ENCODE measurements at regions of chr10 and their contacts with region 1.

Region 1: DNA sequence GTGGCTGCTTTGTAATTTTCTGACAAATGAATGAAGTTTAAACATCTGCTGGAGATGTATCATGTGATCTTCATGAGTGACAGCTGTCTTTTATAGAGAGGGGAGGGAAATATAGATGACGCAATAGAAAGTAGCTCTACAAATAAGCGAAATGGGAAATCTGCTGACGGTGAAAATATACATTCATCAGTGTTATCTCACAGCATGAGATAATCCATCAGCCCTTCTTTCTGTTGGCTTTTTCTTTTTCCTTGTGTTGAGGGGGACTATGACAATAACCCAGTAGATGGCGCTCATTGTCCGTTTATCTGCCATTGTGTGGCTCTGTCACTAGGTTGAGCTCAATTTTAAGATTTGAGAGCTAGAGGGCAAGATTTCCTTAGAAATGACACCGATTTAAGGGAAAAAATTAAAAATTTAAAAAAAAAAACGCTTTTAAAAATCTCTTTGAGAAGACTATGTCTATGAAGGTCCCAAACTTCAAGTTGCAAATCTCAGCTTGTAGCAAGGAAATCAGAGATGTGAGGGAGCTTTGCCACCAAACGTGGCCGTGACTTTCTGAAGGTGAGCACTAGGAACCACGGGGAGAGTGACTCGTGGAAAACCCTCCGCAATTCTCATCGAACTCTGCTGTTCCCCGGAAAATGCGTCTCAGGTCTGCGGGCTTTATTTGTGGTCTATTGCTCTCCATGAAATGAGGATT is 114.6 kb upstream of the SFMBT2 start:
- DNase-seq: peak; percentile 87
- CTCF ChIP-seq: peak; percentile 74

Region 2: GRCh38 chr10:7243873-7244272 is 281.6 kb before region 1 on chr10:
- in situ Hi-C with region 1: no loop called
- DNase-seq: peak; percentile 39
- CTCF ChIP-seq: no peak

Region 3: DNA sequence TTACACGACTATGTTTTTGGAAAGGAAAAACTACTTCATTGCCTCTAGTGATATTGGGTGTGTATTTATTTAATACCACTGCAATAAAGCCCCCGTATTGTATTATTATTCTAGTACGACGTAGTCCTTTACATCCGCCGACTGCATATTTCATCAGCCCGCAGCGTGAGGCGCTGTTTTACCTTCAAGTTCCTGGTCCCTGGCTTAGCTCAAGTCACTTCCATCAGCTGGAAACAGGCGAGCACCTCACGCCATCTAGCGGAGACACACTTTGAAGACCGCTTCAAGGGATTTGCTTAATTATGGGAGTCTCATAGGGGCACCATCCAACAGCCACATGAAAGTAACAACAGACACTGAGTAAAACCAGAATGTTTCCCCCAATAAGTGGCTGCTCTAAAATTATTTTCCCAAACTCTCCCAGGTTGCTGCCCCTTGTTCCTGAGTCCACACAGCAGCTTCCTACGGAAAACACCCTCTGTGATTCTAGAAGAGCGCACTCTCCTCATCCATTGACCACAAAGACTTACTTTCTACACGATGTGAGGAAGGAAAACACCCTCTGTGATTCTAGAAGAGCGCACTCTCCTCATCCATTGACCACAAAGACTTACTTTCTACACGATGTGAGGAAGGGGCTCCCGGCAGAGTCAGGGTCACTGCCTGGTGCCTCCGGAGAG is 161.9 kb after region 1 on chr10:
- in situ Hi-C with region 1: loop called (anchors 10 kb)
- DNase-seq: peak; percentile 72
- CTCF ChIP-seq: peak; percentile 79

Region 4: DNA sequence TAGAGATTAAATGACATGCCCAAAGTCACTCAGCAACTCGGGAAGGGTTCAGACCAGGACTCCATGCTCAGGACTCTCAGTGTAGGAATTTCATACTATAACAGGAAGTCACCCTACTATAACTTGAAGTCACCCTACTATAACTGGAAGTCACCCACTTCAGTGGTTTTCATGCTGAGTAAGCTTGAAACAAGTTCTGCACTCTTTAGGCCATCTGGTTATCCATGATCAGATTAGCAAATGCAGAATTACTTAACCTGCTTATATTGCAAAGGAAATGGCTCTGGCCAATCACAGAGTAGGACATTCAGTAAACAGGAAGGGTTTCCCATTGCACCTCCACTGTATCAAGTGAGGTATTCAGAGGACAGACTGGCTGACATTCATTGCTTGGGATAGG is 1769.4 kb after region 1 on chr10:
- in situ Hi-C with region 1: loop called (anchors 25 kb)
- DNase-seq: peak; percentile 8
- CTCF ChIP-seq: no peak